ENCODE measurements at regions of chr20 and their contacts with region 1.

Region 1: GRCh38 chr20:16337707-16338106 is 235.5 kb downstream of the KIF16B start:
- DNase-seq: no peak
- ATAC-seq: no peak
- H3K4me3 ChIP-seq: no peak overlapping the region
- H3K27ac ChIP-seq: no peak overlapping the region
- H3K4me1 ChIP-seq: no peaks in the 10 kb centered on the region
- H3K27me3 ChIP-seq: no peaks in the 10 kb centered on the region
- CTCF ChIP-seq: no peak

Region 2: DNA sequence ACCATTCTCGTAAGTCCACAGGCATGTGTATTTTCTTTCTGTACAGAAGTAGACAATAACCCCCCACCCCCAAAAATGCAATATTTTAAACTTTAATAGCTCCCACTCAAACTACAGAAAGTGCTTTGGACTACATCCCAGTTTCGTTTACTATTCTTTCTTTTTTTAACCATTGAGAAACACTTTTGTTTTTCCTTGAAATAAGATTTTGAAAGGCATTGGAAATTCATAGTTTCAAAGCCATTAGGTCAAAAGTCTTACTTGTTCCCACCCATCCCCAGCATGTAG is 95.5 kb after region 1 on chr20:
- CTCF ChIA-PET with region 1: no interaction called
- POLR2A ChIA-PET with region 1: interaction called, 12 read pairs
- in situ Hi-C with region 1: no loop called
- intact Hi-C with region 1: no loop called
- DNase-seq: no peak
- ATAC-seq: no peak
- H3K4me3 ChIP-seq: no peak overlapping the region
- H3K27ac ChIP-seq: no peak overlapping the region
- H3K4me1 ChIP-seq: no peaks in the 10 kb centered on the region
- H3K27me3 ChIP-seq: no peaks in the 10 kb centered on the region
- CTCF ChIP-seq: no peak